GM12878 (cell line): ENCODE measurements at regions of chr17 and their contacts with region 1.

Region 1: GRCh38 chr17:59331129-59331928 is at the start of gene YPEL2:
- DNase-seq: peak; percentile 41
- ATAC-seq: peak; percentile 97
- H3K4me3 ChIP-seq: peak within 1 kb of the TSS; percentile 76
- H3K27ac ChIP-seq: no peak within 1 kb of the TSS
- H3K4me1 ChIP-seq: peaks cover 17% of the 10 kb centered on the region
- H3K27me3 ChIP-seq: peaks cover 0 to 7% of the 10 kb centered on the region in 2 experiments; a peak in 2 of 4 replicates
- CTCF ChIP-seq: no peak
- EP300 ChIP-seq: no peak
- POLR2A ChIP-seq: peak; percentile 51; the same call in 1 of the 2 replicates
- RAD21 ChIP-seq: no peak
- polyA plus RNA-seq, gene YPEL2: 0.11 to 0.18 TPM

Region 2: DNA sequence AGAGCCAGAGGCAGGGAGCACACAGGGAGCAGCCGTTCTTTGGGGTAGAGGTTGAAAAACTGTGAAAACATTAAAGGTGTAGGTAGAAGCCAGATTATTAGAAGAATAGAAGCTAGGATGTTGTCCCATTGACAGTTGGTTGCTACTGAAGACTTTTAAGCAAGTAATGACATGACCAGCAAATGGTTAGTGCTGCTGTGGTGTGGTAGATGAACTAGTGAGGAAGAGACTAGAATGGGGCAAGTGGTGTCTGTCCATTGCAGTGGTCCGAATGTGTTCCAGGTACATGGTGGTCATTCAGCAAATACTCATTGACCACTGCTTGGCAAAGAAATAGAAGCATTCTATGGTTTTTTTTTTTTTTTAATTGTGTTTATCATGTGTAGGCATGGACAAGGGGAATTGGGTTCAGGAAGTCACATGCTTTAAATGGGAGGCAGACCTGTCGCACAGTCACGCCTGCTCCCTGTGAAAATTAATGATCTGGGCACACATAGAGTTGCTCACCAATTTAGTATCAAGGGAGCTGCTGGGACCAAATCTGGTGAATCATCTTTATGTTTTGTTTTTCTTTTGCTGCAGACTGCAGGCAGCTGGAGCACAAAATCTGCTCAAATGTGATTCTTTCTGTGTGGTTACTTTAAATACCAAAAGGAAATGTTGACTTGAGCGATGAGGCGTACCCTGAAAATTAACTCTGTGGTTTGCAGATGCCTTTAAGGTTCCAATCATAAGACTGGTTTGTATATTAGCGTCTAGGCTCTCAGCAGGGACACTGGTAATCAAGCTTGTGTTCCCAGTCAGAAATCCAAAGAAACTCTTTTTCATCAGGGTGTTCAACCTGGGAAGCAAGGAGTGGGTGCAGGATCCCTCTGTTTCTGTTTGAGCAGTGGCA is 30.8 kb after region 1 on chr17:
- CTCF ChIA-PET with region 1: interaction called, 7 read pairs
- POLR2A ChIA-PET with region 1: interaction called, 10 read pairs
- RAD21 ChIA-PET with region 1: interaction called, 6 read pairs
- SMC1A ChIA-PET with region 1: interaction called, 11 read pairs
- in situ Hi-C with region 1: no loop called
- intact Hi-C with region 1: no loop called
- DNase-seq: peak; percentile 86
- ATAC-seq: peak; percentile 79
- H3K4me3 ChIP-seq: peak overlapping the region; percentile 40; the same call in 1 of the 2 replicates
- H3K27ac ChIP-seq: peak overlapping the region; percentile 54
- H3K4me1 ChIP-seq: peaks cover 50% of the 10 kb centered on the region
- H3K27me3 ChIP-seq: no peaks in the 10 kb centered on the region
- CTCF ChIP-seq: no peak
- EP300 ChIP-seq: 0 out of 4 replicates have a peak, but pooled peaks of 1 of the 2 experiments have one; percentile 48
- POLR2A ChIP-seq: no peak
- RAD21 ChIP-seq: no peak

Region 3: DNA sequence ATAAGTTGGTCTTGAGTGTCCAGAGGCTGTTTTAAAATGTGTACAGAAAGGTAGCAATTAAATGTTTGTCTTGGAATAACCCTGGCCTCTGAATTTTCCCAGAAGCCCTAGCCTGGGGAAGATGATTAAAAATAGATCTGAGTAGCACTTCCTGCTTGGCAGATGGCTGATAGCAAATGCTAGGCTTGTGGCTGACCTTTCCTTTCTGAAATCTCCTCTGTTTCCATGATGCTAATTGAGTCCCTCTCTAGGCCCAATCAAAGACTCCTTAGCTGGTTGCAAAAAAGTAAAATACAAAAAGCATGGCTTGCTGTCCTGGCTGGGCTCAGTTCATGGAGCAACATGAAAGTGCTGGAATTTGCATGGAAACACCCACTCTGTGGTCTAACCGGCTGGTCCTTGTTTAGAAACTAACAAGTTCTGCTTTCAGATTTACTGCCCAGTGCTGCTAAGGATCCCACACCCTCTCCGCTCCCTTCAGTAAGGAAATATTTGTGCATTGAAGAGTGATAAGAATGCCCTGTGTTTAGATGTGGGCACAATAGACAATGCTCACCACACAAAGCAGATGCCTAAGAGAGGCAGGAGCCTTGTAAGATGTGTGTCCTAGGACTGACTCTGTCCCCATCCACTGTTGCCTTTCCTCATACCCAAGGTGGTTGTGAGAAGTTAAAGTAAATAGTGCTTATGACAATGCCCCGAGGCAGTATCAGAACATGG is 41.0 kb after region 1 on chr17:
- CTCF ChIA-PET with region 1: interaction called, 5 read pairs
- POLR2A ChIA-PET with region 1: no interaction called
- RAD21 ChIA-PET with region 1: interaction called, 7 read pairs
- SMC1A ChIA-PET with region 1: interaction called, 13 read pairs
- in situ Hi-C with region 1: no loop called
- intact Hi-C with region 1: loop called (anchors 5 kb)
- DNase-seq: peak; percentile 79
- ATAC-seq: peak; percentile 88
- H3K4me3 ChIP-seq: peak overlapping the region; percentile 18; the same call in 1 of the 2 replicates
- H3K27ac ChIP-seq: peak overlapping the region; percentile 64
- H3K4me1 ChIP-seq: peaks cover 60% of the 10 kb centered on the region
- H3K27me3 ChIP-seq: no peaks in the 10 kb centered on the region
- CTCF ChIP-seq: no peak
- EP300 ChIP-seq: peak; percentile 68 to 69
- POLR2A ChIP-seq: no peak
- RAD21 ChIP-seq: no peak

Region 4: DNA sequence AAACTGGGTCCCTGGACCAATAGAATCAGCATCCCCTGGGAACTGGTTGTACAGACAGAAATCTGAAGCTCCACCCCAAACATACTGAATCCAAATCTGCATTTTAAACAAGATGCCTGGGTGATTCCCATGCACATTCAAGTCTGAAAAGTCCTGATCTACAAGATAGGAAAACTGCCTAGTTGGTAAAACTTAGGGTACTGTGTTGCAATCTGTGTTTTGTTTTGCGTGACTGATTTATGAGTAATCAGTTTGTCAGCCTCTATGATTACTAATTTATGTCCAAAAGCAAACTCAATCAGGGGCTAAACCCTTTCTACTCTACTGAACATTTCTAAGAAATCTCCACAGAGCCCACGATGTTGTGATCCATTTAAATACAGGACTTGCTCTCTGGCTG is 103.9 kb after region 1 on chr17:
- CTCF ChIA-PET with region 1: interaction called, 221 read pairs
- POLR2A ChIA-PET with region 1: interaction called, 5 read pairs
- RAD21 ChIA-PET with region 1: interaction called, 126 read pairs
- SMC1A ChIA-PET with region 1: interaction called, 100 read pairs
- in situ Hi-C with region 1: no loop called
- intact Hi-C with region 1: loop called (anchors 1 kb)
- DNase-seq: no peak
- ATAC-seq: peak; percentile 26; the same call in 2 of the 3 replicates
- H3K4me3 ChIP-seq: no peak overlapping the region
- H3K27ac ChIP-seq: no peak overlapping the region
- H3K4me1 ChIP-seq: peaks cover 17% of the 10 kb centered on the region
- H3K27me3 ChIP-seq: no peaks in the 10 kb centered on the region
- CTCF ChIP-seq: no peak
- EP300 ChIP-seq: no peak
- POLR2A ChIP-seq: no peak
- RAD21 ChIP-seq: no peak

Region 5: DNA sequence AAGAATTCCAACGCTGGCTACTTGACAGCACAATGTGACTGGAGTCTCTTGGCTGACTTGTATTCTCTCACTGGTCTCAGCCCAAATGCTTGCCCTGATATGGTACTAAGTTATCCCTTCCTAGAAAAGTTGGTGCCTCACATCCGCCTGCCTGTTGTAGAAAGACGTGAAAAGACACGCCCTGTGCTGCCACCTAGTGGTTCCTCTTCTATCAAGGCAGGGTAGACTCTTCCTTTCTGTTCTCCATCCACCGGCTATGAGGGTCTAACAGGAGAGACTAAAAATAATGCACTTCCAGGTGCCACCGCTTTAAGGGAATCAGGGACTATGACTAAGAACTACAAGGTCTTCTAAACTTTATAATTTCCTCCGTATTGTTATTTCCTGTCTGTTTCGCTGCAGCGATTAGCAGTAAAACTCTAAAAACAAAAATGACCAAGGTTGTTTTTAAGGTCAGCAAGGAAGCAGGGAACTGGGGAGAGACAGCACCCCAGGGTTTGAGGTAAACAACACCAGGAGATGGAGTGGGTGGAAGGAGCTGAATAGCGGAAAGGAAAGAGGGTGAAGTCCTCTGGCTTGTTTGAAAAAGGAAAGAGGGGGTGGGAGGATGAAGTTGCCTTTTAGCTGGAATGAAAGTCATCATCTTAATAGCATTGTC is 109.6 kb after region 1 on chr17:
- CTCF ChIA-PET with region 1: interaction called, 221 read pairs
- POLR2A ChIA-PET with region 1: interaction called, 5 read pairs
- RAD21 ChIA-PET with region 1: interaction called, 126 read pairs
- SMC1A ChIA-PET with region 1: interaction called, 100 read pairs
- in situ Hi-C with region 1: no loop called
- intact Hi-C with region 1: loop called (anchors 1 kb)
- DNase-seq: peak; percentile 68
- ATAC-seq: peak; percentile 99
- H3K4me3 ChIP-seq: peak overlapping the region; percentile 34; the same call in 1 of the 2 replicates
- H3K27ac ChIP-seq: no peak overlapping the region
- H3K4me1 ChIP-seq: peaks cover 25% of the 10 kb centered on the region
- H3K27me3 ChIP-seq: no peaks in the 10 kb centered on the region
- CTCF ChIP-seq: peak; percentile 74 to 90 (median 86)
- EP300 ChIP-seq: no peak
- POLR2A ChIP-seq: no peak
- RAD21 ChIP-seq: peak; percentile 97